ENCODE measurements at regions of chr4 and their contacts with region 1.

Region 1: DNA sequence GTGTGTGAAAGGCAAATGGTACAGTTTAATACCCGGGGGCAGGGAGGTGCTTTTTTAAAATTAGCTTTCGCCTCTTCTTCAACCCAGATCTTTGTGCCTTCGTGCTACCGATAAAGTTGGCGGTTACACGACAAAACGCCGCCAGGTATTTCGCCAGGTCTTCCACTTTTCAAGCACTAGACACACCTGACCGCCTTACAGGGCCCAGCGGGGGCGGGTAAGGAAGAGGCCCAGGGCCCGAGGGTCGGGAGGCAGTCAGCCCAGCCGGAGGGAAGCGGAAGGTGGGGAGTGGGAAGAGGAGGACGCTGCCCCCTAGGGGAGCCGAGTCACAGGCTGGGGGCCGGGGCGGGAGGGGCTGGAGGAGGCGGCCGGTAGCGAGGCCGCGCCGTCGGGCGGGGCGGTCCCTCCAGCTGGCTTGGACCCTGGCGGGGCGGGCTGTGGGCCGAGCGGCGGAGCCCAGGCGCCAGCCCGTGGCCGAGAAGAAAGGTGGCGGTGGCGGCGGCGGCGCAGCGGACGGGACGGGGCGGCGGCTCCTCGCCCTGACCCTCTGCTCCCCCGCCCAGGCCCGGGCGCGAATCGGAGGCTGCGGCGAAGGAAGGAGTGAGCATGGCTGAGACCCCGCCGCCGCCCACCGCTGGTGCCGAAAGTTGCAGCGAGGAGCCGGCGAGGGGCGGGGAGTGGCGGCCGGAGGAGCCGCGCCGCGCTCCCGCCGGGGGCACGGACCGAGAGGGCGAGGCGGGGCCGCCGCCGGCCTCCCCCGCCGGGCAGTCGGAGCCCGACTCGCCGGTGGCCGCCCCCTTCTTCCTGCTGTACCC is 16.2 kb downstream of the UTP3 start:
- DNase-seq: peak; percentile 84
- CTCF ChIP-seq: peak; percentile 25

Region 2: GRCh38 chr4:70518716-70519115 is 185.8 kb before region 1 on chr4:
- CTCF ChIA-PET with region 1: no interaction called
- POLR2A ChIA-PET with region 1: no interaction called
- DNase-seq: no peak
- CTCF ChIP-seq: no peak

Region 3: GRCh38 chr4:70601422-70602039 is 103.0 kb before region 1 on chr4:
- CTCF ChIA-PET with region 1: interaction called, 12 read pairs
- POLR2A ChIA-PET with region 1: no interaction called
- DNase-seq: peak; percentile 63
- CTCF ChIP-seq: peak; percentile 85

Region 4: DNA sequence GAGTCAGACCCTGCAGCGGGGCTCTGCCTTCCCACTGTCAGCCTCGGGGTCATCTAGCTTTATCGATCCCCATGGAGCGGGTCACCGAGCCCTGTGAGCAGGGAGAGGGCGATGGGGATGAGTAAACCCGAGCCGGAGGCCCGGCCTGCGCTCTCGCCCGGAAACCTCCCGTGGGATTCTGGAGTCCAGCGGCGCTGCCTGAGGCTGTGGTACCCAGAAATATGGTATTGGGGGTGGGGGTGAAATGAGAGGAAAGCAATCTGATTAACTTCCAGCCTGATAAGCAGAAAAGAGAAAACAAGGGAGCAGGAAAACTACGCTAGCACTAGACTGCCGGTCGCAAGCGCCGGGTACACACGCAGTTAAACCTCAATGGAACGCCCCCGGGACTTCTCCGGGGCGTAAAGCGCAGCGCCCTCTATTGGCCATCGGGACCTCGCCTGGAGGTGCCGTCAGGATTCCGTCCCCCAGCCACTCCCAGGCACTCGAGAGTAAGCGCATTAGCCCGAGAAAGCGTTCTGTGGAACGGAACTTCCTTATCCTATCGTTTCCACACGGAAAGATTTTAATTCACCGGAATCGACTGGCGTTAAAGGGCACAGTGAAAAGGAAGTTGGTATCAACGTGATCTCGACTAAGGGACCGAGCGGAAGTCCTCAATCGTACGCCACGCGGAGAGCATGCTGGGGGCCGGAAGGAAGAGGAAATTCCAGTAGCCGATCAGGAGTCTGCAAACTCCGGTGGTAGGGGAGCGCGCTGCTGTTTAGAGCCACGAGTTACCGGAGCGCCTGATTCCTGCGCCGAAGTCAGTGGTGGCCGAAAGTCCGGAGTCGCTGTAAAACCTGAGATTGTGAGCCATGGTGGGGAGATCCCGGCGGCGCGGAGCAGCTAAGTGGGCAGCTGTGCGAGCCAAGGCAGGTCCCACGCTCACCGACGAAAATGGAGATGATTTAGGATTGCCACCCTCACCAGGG is 16.4 kb before region 1 on chr4 and contains the start of gene UTP3:
- CTCF ChIA-PET with region 1: interaction called, 47 read pairs
- POLR2A ChIA-PET with region 1: no interaction called
- DNase-seq: peak; percentile 87
- CTCF ChIP-seq: peak; percentile 95

Region 5: DNA sequence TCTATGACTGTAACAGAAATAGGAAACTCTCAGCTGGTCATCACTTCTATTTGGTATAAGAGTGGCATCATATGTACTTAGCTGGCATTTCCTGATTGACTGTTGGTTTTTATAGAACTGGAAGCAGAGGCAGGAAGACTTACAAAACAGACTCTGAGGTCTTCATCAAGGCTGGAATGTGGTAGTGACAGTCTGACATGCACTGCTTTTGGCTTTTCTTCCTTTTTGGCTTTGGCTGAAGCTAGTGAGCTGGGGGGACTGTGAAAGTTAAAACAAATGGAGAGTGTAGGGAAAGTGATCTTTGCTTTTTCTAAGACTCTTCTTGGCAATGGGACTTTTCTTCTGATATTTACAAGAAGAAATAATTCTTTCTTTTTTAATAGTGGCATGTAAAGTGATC is 513.1 kb after region 1 on chr4:
- CTCF ChIA-PET with region 1: no interaction called
- POLR2A ChIA-PET with region 1: no interaction called
- DNase-seq: no peak
- CTCF ChIP-seq: no peak